Heart right ventricle (tissue), 16 donors: ENCODE measurements at regions of chr17 and their contacts with region 1.

Region 1: DNA sequence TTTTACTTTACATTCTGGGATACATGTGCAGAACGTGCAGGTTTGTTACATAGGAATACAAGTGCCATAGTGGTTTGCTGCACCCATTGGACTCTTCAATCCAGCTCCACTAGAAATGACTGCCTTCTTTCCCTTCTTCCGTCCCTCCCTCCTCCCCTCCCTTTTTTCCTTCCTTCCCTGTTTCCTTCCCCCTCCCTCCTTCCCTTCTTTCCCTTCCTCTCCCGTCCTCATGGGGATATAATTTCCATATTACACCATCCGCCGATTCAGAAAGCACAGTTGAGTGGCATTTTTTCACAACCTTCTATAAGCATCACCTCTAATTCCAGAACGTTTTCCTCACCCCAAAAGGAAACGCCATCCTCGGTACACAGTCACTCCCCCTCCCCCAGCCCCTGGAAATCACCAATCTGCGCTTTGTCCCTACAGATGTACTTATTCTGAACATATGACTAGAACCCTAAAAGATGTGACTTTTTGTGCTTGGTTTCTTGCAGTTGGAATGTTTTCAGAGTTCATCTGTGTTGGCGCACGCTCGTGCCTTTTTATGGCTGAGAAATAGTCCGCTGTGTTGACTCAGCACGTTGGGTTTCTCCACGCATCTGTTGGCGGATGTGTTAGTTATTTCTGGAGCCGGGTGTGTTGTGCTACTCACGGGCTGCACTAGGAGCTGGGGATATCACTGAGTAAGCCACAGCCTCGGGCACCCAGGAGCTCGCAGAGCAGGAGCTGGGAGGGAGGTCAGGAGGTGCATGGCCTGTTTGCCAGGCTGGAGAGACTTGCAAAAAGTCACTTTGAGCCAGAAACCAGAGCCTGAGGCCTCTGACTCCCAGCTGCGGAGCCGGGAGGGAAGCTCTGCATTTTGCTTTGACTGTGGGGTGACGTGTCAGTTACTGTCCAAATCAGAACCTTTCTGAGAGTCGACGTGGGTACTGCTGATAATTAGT is 336.4 kb downstream of the SEC14L1 start:
- DNase-seq: peak; percentile 52 to 74
- ATAC-seq: peak; percentile 66 to 87 (median 78)
- H3K4me3 ChIP-seq: no peak overlapping the region
- H3K27ac ChIP-seq: peak overlapping the region in 9 of 10 donors; percentile 5 to 74 (median 61)
- H3K4me1 ChIP-seq: peaks cover 20 to 88% (median 79%) of the 10 kb centered on the region in 9 donors
- H3K27me3 ChIP-seq: no peaks in the 10 kb centered on the region
- CTCF ChIP-seq: peak in 1 of 9 donors; percentile 8

Region 2: GRCh38 chr17:77444984-77445759 is 32.0 kb before region 1 on chr17:
- intact Hi-C with region 1: loop called in 1 of 10 experiments (anchors 5 kb)
- DNase-seq: no peak
- ATAC-seq: peak; percentile 31 to 71 (median 47)
- H3K4me3 ChIP-seq: peak overlapping the region in 4 of 10 donors; percentile 7 to 36 (median 14)
- H3K27ac ChIP-seq: peak overlapping the region in 9 of 10 donors; percentile 59 to 89 (median 74)
- H3K4me1 ChIP-seq: peaks cover 32 to 92% (median 73%) of the 10 kb centered on the region in 9 donors
- H3K27me3 ChIP-seq: no peaks in the 10 kb centered on the region
- CTCF ChIP-seq: no peak